ENCODE measurements at regions of chr7 and their contacts with region 1.

Region 1: GRCh38 chr7:77651573-77652162 is 44.6 kb upstream of the RSBN1L start:
- DNase-seq: peak; percentile 60
- CTCF ChIP-seq: peak; percentile 69

Region 2: GRCh38 chr7:77627309-77627676 is 24.4 kb before region 1 on chr7:
- CTCF ChIA-PET with region 1: interaction called, 11 read pairs
- POLR2A ChIA-PET with region 1: no interaction called
- DNase-seq: no peak
- CTCF ChIP-seq: no peak

Region 3: GRCh38 chr7:77674878-77675277 is 23.2 kb after region 1 on chr7:
- CTCF ChIA-PET with region 1: interaction called, 20 read pairs
- POLR2A ChIA-PET with region 1: no interaction called
- DNase-seq: no peak
- CTCF ChIP-seq: no peak

Region 4: GRCh38 chr7:77696198-77697028 is 44.7 kb after region 1 on chr7 and contains the start of gene RSBN1L:
- CTCF ChIA-PET with region 1: interaction called, 17 read pairs
- POLR2A ChIA-PET with region 1: interaction called, 3 read pairs
- DNase-seq: peak; percentile 96
- CTCF ChIP-seq: peak; percentile 24

Region 5: GRCh38 chr7:77765906-77766800 is 114.5 kb after region 1 on chr7:
- CTCF ChIA-PET with region 1: interaction called, 43 read pairs
- POLR2A ChIA-PET with region 1: no interaction called
- DNase-seq: no peak
- CTCF ChIP-seq: no peak

Measured in GM10248 (cell line).